Activated CD4-positive, alpha-beta T cell treated with anti-CD3 and anti-CD28 coated beads, Interleukin-2, amount 10 ng/mL, durations not matched to agents 24 days and 14 days (primary cell): ENCODE measurements at regions of chr3 and their contacts with region 1.

Region 1: GRCh38 chr3:53709860-53710674 is 136.2 kb downstream of the CHDH start:
- DNase-seq: peak; percentile 88
- H3K4me3 Mint-ChIP-seq: no peak overlapping the region
- H3K27ac Mint-ChIP-seq: no peak overlapping the region
- H3K4me1 Mint-ChIP-seq: peaks cover 16% of the 10 kb centered on the region
- H3K27me3 Mint-ChIP-seq: peaks cover 4% of the 10 kb centered on the region

Region 2: GRCh38 chr3:53303957-53304356 is 406.1 kb before region 1 on chr3:
- intact Hi-C with region 1: loop called (anchors 2 kb)
- DNase-seq: no peak
- H3K4me3 Mint-ChIP-seq: no peak overlapping the region
- H3K27ac Mint-ChIP-seq: peak overlapping the region; percentile 18
- H3K4me1 Mint-ChIP-seq: peaks cover 2% of the 10 kb centered on the region
- H3K27me3 Mint-ChIP-seq: no peaks in the 10 kb centered on the region

Region 3: GRCh38 chr3:53375019-53375418 is 335.0 kb before region 1 on chr3:
- intact Hi-C with region 1: loop called (anchors 2 kb)
- DNase-seq: peak; percentile 84
- H3K4me3 Mint-ChIP-seq: no peak overlapping the region
- H3K27ac Mint-ChIP-seq: no peak overlapping the region
- H3K4me1 Mint-ChIP-seq: no peaks in the 10 kb centered on the region
- H3K27me3 Mint-ChIP-seq: peaks cover 14% of the 10 kb centered on the region

Region 4: DNA sequence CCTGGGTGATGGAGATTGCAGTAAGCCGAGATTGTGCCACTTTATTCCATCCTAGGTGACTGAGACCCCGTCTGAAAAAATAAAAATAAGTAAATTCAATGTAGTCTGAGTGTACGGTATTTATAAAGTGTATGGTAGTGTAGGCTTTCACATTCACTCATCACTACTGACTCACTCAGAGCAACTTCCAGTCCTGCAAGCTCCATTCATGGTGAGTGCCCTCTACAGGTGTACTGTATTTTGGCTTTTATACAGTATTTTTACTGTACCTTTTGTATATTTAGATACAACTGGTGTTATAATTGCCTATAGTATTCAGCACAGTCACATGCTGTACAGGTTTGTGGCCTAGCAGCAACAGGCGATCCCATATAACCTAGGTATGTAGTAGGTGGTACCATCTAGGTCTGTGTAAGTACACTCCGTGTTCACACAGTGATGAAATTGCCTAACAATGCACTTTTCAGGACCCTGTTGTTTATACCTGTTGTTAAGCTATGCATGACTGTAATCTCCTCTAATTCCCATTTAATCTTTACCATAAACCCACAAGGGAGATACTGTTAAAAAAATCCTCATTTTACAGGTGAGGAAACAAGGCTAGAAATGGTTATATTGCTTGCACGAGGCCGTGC is 196.4 kb before region 1 on chr3:
- intact Hi-C with region 1: loop called (anchors 10 kb)
- DNase-seq: no peak
- H3K4me3 Mint-ChIP-seq: no peak overlapping the region
- H3K27ac Mint-ChIP-seq: no peak overlapping the region
- H3K4me1 Mint-ChIP-seq: no peaks in the 10 kb centered on the region
- H3K27me3 Mint-ChIP-seq: peaks cover 29% of the 10 kb centered on the region

Region 5: DNA sequence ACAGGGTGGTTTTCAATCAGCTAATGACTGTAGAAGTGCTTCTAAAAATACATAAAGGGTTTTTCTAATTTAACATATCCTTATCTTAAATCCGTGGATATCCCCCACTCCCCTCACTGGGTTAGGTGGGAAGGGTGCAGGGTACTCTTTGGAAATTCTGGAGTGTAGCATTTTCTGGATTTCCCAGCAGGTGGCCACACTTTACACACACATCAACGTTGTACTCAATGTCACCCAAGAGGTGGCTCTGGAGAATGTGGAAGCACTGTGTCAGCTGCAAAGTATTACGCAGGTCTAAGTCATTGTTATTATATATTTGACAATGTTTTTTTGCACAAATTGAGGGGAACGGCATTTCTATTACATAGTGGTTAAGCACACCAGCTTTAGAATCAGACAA is 32.7 kb before region 1 on chr3:
- intact Hi-C with region 1: loop called (anchors 5 kb)
- DNase-seq: peak; percentile 55
- H3K4me3 Mint-ChIP-seq: no peak overlapping the region
- H3K27ac Mint-ChIP-seq: no peak overlapping the region
- H3K4me1 Mint-ChIP-seq: no peaks in the 10 kb centered on the region
- H3K27me3 Mint-ChIP-seq: peaks cover 22% of the 10 kb centered on the region

Region 6: GRCh38 chr3:53696401-53697150 is 13.5 kb before region 1 on chr3:
- intact Hi-C with region 1: no loop called
- DNase-seq: no peak
- H3K4me3 Mint-ChIP-seq: no peak overlapping the region
- H3K27ac Mint-ChIP-seq: no peak overlapping the region
- H3K4me1 Mint-ChIP-seq: peaks cover 12% of the 10 kb centered on the region
- H3K27me3 Mint-ChIP-seq: peaks cover 18% of the 10 kb centered on the region